MCF 10A (cell line): ENCODE measurements at regions of chr12 and their contacts with region 1.

Region 1: DNA sequence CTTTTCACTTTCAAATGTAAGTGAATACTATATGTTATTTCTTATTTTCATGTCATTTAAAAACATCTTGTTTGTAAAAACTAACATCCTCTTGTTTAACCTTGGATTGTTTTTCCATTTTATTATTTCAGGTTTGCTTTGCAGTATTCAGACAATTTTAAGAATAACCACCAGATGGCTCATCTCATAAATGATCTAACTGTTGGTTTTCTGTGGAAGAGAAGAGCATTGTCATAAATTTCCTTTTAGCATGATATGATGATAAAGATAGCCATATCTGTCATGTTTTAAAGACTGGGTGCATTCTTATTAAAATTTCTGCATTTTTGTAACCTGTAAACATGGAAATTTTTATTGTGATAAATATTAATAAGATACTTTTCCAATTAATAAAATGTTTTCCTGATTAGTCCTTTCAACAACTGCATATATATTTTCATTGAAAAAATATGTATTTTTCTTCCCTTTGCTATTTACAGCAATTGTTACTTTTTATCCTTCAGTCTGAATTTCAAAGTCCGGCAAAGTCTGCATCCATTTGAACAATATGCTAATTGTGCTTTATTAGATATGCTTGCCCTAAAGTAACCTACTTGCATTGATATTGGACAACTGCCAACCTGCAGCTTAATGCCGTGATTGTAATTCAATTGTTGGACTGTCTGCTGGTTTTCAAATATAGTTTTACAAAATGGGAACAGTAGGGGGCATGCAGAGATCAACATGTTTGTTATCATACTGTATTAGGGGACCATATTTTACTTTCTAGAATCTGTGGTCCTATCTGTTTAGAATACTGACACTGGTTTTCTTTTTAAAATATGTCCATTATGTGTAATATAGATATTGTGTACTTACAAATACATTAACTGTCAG is 163.4 kb downstream of the GARIN6 start:
- DNase-seq: peak; percentile 78
- H3K4me3 Mint-ChIP-seq: no peak overlapping the region
- H3K27ac Mint-ChIP-seq: no peak overlapping the region
- H3K4me1 Mint-ChIP-seq: peaks cover 6% of the 10 kb centered on the region
- H3K27me3 Mint-ChIP-seq: no peaks in the 10 kb centered on the region
- CTCF ChIP-seq: peak; percentile 41

Region 2: DNA sequence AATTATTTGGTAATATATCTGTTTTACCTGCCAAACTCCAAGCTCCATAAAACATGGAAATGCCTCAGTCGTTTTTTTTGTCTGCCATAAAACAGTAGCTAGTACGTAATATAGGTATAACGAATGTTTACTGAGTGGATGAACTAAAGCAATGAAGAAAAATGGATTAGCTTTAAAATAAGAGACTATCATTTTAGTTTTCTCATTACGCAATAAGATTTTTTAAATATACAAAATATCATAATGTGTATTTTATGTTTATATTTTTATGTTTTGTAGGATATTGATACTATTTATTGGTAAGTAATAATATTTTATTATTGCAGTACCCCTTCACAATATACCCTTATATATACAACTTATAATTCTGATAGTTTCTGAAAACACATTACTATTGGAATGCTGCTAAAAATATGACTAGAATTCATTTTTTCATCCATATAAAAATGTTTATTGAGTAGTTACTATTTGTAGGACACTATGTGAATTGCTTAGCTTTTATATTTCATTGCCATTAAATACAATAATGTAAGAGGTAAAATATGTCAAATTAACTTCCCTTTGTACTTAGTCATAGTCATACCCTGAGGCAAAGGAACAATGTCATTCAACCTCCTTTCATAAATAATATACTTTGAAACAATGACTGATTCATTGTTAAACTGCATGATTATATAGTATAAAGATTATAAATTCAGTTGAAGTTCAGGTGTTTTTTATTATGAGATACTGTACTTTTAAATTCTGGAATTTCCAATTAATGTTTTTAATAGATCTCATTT is 58.4 kb before region 1 on chr12:
- CTCF ChIA-PET with region 1: no interaction called
- POLR2A ChIA-PET with region 1: no interaction called
- intact Hi-C with region 1: no loop called
- DNase-seq: peak; percentile 46
- H3K4me3 Mint-ChIP-seq: no peak overlapping the region
- H3K27ac Mint-ChIP-seq: no peak overlapping the region
- H3K4me1 Mint-ChIP-seq: peaks cover 11% of the 10 kb centered on the region
- H3K27me3 Mint-ChIP-seq: no peaks in the 10 kb centered on the region
- CTCF ChIP-seq: no peak

Region 3: DNA sequence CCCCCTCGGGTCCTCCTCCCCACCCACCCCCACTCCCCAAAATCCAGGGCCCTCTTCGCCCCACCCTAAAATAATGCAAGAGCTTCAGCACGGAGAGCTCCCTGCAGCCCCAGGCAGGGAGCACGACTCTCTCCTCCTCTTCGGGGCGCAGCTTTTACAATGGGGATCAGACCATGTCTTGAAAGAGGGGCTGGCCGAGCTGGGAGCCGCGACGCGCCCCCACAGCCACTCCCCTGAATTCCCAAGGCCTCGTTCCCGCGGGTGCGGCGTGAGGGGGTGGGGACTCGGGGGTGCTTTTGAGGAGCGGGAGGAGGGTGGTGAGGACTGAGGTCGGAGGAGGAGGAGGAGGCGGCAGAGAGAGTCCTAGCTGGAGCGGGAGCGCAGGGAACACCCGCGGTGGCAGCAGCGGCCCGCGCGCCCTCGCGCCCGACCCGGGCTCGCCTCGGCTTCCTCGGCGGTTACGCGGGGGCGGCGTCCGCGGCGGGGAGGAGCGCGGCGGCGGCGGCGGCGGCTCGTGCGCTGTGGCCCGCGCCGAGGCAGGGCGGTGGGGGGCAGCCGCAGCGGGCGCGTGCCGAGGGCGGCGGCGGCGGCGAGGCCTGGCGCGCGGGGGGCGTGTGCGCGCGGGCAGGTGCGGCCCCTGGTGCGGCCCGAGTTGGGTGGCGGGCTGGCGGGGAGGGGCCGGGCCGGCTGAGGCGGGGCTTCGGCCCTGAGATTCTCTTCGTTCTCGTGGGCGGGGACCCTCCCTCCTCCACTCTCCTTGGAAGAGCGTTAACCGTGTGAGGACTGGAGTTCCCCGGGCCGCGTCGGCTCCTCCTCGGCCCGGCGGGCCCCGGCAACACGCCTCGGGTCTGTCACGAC is 173.5 kb after region 1 on chr12 and contains the start of gene ANKS1B:
- CTCF ChIA-PET with region 1: no interaction called
- POLR2A ChIA-PET with region 1: interaction called, 3 read pairs
- intact Hi-C with region 1: loop called (anchors 1 kb)
- DNase-seq: peak; percentile 79
- H3K4me3 Mint-ChIP-seq: peak within 1 kb of the TSS; percentile 89
- H3K27ac Mint-ChIP-seq: peak within 1 kb of the TSS; percentile 16
- H3K4me1 Mint-ChIP-seq: peaks cover 20% of the 10 kb centered on the region
- H3K27me3 Mint-ChIP-seq: no peaks in the 10 kb centered on the region
- CTCF ChIP-seq: no peak
- total RNA-seq, gene ANKS1B: 17.7 and 18.8 TPM in 2 replicates

Region 4: GRCh38 chr12:100058482-100059029 is 247.6 kb after region 1 on chr12:
- CTCF ChIA-PET with region 1: interaction called, 7 read pairs
- POLR2A ChIA-PET with region 1: no interaction called
- intact Hi-C with region 1: loop called (anchors 5 kb)
- DNase-seq: peak; percentile 47
- H3K4me3 Mint-ChIP-seq: no peak overlapping the region
- H3K27ac Mint-ChIP-seq: no peak overlapping the region
- H3K4me1 Mint-ChIP-seq: no peaks in the 10 kb centered on the region
- H3K27me3 Mint-ChIP-seq: no peaks in the 10 kb centered on the region
- CTCF ChIP-seq: no peak

Region 5: GRCh38 chr12:100200463-100201181 is 389.7 kb after region 1 on chr12 and contains the start of gene ACTR6:
- CTCF ChIA-PET with region 1: no interaction called
- POLR2A ChIA-PET with region 1: interaction called, 3 read pairs
- intact Hi-C with region 1: loop called (anchors 2 kb)
- DNase-seq: peak; percentile 96
- H3K4me3 Mint-ChIP-seq: peak within 1 kb of the TSS; percentile 99
- H3K27ac Mint-ChIP-seq: peak within 1 kb of the TSS; percentile 93
- H3K4me1 Mint-ChIP-seq: peaks cover 10% of the 10 kb centered on the region
- H3K27me3 Mint-ChIP-seq: no peaks in the 10 kb centered on the region
- CTCF ChIP-seq: no peak
- total RNA-seq, gene ACTR6: 26.4 and 28.8 TPM in 2 replicates

Region 6: GRCh38 chr12:100215209-100215608 is 404.3 kb after region 1 on chr12:
- CTCF ChIA-PET with region 1: no interaction called
- POLR2A ChIA-PET with region 1: no interaction called
- intact Hi-C with region 1: no loop called
- DNase-seq: peak; percentile 25
- H3K4me3 Mint-ChIP-seq: no peak overlapping the region
- H3K27ac Mint-ChIP-seq: peak overlapping the region; percentile 51
- H3K4me1 Mint-ChIP-seq: peaks cover 9% of the 10 kb centered on the region
- H3K27me3 Mint-ChIP-seq: no peaks in the 10 kb centered on the region
- CTCF ChIP-seq: no peak

Region 7: GRCh38 chr12:100554608-100555077 is 743.7 kb after region 1 on chr12:
- CTCF ChIA-PET with region 1: no interaction called
- POLR2A ChIA-PET with region 1: no interaction called
- intact Hi-C with region 1: loop called (anchors 1 kb)
- DNase-seq: peak; percentile 91
- H3K4me3 Mint-ChIP-seq: no peak overlapping the region
- H3K27ac Mint-ChIP-seq: no peak overlapping the region
- H3K4me1 Mint-ChIP-seq: no peaks in the 10 kb centered on the region
- H3K27me3 Mint-ChIP-seq: no peaks in the 10 kb centered on the region
- CTCF ChIP-seq: peak; percentile 91